ENCODE measurements at regions of chr19 and their contacts with region 1.

Region 1: GRCh38 chr19:58278157-58279041 is at the start of gene ZNF8:
- DNase-seq: peak; percentile 98
- H3K4me3 ChIP-seq: peak within 1 kb of the TSS; percentile 76 to 89 (median 86)
- H3K27ac ChIP-seq: peak within 1 kb of the TSS; percentile 88 to 94 (median 90)
- H3K4me1 ChIP-seq: peaks cover 0 to 23% (median 19%) of the 10 kb centered on the region in 4 donors
- H3K27me3 ChIP-seq: no peaks in the 10 kb centered on the region
- CTCF ChIP-seq: no peak
- EP300 ChIP-seq: peak in 1 of 4 donors; percentile 23
- POLR2A ChIP-seq: peak; percentile 45 to 69
- total RNA-seq, gene ZNF8: 4.9 to 8.6 (median 6.5) TPM

Region 2: GRCh38 chr19:57934820-57935665 is 343.4 kb before region 1 on chr19 and contains the start of gene ZNF418:
- intact Hi-C with region 1: no loop called
- DNase-seq: peak; percentile 75
- H3K4me3 ChIP-seq: peak within 1 kb of the TSS; percentile 59 to 80 (median 72)
- H3K27ac ChIP-seq: peak within 1 kb of the TSS; percentile 76 to 81 (median 79)
- H3K4me1 ChIP-seq: peaks cover 0 to 8% (median 7%) of the 10 kb centered on the region in 4 donors
- H3K27me3 ChIP-seq: no peaks in the 10 kb centered on the region
- CTCF ChIP-seq: no peak
- EP300 ChIP-seq: no peak
- POLR2A ChIP-seq: no peak
- total RNA-seq, gene ZNF418: 8.3 to 12.5 (median 10.8) TPM

Region 3: DNA sequence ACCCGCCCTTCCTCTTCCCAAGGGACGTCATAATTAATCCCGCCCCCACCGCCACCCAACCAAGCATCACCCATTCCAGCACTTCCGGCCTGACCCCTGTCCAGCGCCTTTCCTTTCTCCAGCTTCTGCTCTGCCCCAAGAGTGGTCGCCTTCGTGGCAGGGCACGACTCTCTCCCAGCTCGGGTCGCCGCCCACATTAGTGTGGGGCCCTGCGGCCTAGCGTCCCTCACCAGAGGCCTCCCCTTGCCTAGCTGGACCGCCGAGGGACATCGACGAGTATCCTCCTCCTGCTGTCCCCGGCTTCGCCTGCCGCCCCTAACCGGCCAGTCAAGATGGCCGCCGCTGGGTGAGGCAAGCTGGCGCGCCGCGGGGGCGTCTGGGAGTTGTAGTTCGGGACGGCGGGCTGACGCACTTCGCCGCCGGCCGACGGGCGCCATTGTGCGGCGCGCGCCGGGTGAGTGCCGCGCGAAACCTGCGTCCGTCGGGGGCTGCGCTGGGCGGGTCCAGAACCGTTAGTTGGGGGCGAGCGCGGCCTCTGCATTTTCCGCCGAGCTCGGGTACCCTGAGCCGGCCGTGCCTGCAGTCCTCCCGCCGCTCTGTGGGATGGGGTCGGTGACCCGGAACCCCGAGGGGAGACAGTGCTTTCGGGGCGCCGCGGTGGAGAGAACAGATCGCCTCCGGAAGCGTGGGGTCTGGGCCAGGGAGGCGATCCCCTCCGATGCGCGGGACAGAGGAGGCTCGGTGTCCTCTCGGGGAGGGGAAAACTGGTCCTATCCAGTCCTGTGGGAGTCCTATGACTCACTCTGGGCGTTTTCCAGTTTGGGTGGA is 95.2 kb before region 1 on chr19 and contains the start of gene ZNF274:
- intact Hi-C with region 1: loop called (anchors 5 kb)
- DNase-seq: peak; percentile 98
- H3K4me3 ChIP-seq: peak within 1 kb of the TSS; percentile 62 to 77 (median 68)
- H3K27ac ChIP-seq: peak within 1 kb of the TSS; percentile 91 to 97 (median 94)
- H3K4me1 ChIP-seq: peaks cover 0 to 9% (median 0%) of the 10 kb centered on the region in 4 donors
- H3K27me3 ChIP-seq: no peaks in the 10 kb centered on the region
- CTCF ChIP-seq: no peak
- EP300 ChIP-seq: no peak
- POLR2A ChIP-seq: peak; percentile 54 to 57
- total RNA-seq, gene ZNF274: 18.3 to 26.7 (median 22.6) TPM

Region 4: GRCh38 chr19:58294743-58295374 is 16.5 kb after region 1 on chr19:
- intact Hi-C with region 1: no loop called
- DNase-seq: no peak
- H3K4me3 ChIP-seq: no peak overlapping the region
- H3K27ac ChIP-seq: no peak overlapping the region
- H3K4me1 ChIP-seq: no peaks in the 10 kb centered on the region
- H3K27me3 ChIP-seq: no peaks in the 10 kb centered on the region
- CTCF ChIP-seq: no peak
- EP300 ChIP-seq: no peak
- POLR2A ChIP-seq: no peak

Region 5: GRCh38 chr19:58305065-58305931 is 26.9 kb after region 1 on chr19 and contains the start of gene ERVK3-1:
- intact Hi-C with region 1: loop called (anchors 2 kb)
- DNase-seq: peak; percentile 98
- H3K4me3 ChIP-seq: peak within 1 kb of the TSS; percentile 80 to 93 (median 90)
- H3K27ac ChIP-seq: peak within 1 kb of the TSS; percentile 88 to 93 (median 90)
- H3K4me1 ChIP-seq: peaks cover 0 to 17% (median 14%) of the 10 kb centered on the region in 4 donors
- H3K27me3 ChIP-seq: no peaks in the 10 kb centered on the region
- CTCF ChIP-seq: peak in 3 of 4 experiments; percentile 21 to 44 (median 36)
- EP300 ChIP-seq: peak in 1 of 4 donors; percentile 62
- POLR2A ChIP-seq: peak; percentile 83 to 88
- total RNA-seq, gene ERVK3-1: 41.7 to 49.4 (median 44.0) TPM